WTC11 (cell line): ENCODE measurements at regions of chr17 and their contacts with region 1.

Region 1: GRCh38 chr17:3907483-3908216 is 8.6 kb downstream of the P2RX1 start:
- DNase-seq: peak; percentile 46
- ATAC-seq: peak; percentile 66
- H3K4me3 Mint-ChIP-seq: no peak overlapping the region
- H3K27ac Mint-ChIP-seq: 0 out of 2 replicates have a peak overlapping the region, but pooled peaks have one; percentile 51
- H3K4me1 Mint-ChIP-seq: peaks cover 13% of the 10 kb centered on the region
- H3K27me3 Mint-ChIP-seq: no peaks in the 10 kb centered on the region
- CTCF ChIP-seq: no peak

Region 2: DNA sequence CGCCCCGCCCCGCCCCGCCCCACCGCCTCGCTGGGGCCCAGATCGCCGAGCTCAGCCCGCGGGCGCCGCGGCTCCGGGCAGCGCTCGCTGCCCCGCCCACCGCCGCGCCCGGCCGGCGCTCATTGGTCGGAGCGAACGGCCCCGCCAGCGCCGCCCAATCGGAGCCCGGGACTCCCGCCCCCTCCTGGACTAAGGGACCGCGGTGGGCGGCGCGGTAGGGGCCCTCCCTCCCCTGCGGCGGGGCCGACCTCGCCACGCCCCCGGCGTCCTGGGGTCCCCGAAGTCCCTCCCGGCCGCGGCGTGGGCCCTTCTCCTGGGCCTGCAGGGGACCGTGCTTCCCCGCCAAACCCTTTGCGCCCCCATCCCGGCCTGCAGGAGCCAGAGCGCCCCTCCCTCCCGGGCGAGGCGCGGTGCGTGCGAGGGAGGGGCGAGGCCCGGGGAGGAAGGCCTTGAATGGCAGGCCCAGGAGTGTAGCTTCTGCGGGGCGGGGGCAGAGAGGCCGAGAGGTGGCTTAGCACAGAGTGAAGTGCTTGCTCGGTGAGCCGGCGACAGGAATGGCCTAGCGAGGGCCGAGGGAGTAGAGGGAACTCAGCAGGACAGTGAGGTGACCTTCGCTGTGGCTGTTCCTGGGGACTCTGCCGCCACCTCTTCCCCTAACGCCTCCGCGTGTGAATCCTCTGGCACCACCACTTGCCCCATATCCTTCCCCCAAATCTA is 14.5 kb before region 1 on chr17 and contains the start of gene CAMKK1:
- CTCF ChIA-PET with region 1: interaction called, 11 read pairs
- POLR2A ChIA-PET with region 1: no interaction called
- DNase-seq: peak; percentile 86
- ATAC-seq: peak; percentile 80
- H3K4me3 Mint-ChIP-seq: peak within 1 kb of the TSS; percentile 68
- H3K27ac Mint-ChIP-seq: peak within 1 kb of the TSS; percentile 90
- H3K4me1 Mint-ChIP-seq: peaks cover 29% of the 10 kb centered on the region
- H3K27me3 Mint-ChIP-seq: peaks cover 7% of the 10 kb centered on the region; the same call in 1 of the 2 replicates
- CTCF ChIP-seq: no peak
- total RNA-seq, gene CAMKK1: 8.0 to 9.6 TPM (median 8.7 TPM) in 3 replicates